Tibial artery (tissue), 4 donors: ENCODE measurements at regions of chr13 and their contacts with region 1.

Region 1: GRCh38 chr13:98328911-98329310 is 151.8 kb upstream of the RNF113B start:
- DNase-seq: no peak
- H3K4me3 ChIP-seq: no peak overlapping the region
- H3K27ac ChIP-seq: no peak overlapping the region
- H3K4me1 ChIP-seq: peaks cover 0 to 6% (median 0%) of the 10 kb centered on the region in 4 donors
- H3K27me3 ChIP-seq: no peaks in the 10 kb centered on the region
- CTCF ChIP-seq: no peak

Region 2: DNA sequence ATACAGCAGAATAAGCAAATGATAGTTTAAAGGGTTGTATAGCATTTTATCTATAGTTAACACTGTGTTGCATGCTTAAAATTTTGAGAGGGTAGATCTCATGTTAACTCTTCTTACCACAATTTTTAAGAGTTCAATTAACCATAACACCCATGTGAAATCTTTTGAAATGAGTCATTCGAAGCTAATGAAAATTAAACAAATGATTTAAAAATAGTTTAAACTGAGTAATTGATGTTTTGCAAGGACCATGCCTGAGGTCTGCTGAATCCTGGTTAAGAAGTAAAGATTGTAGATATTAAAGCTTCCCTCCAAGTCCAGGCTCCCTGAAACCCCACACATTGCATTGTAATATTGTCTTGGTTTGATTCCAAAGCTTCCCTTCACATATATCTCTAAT is 24.8 kb after region 1 on chr13:
- intact Hi-C with region 1: loop called (anchors 1 kb)
- DNase-seq: no peak
- H3K4me3 ChIP-seq: no peak overlapping the region
- H3K27ac ChIP-seq: no peak overlapping the region
- H3K4me1 ChIP-seq: peaks cover 0 to 6% (median 0%) of the 10 kb centered on the region in 4 donors
- H3K27me3 ChIP-seq: no peaks in the 10 kb centered on the region
- CTCF ChIP-seq: no peak

Region 3: GRCh38 chr13:98384739-98385138 is 55.8 kb after region 1 on chr13:
- intact Hi-C with region 1: no loop called
- DNase-seq: no peak
- H3K4me3 ChIP-seq: no peak overlapping the region
- H3K27ac ChIP-seq: no peak overlapping the region
- H3K4me1 ChIP-seq: peaks cover 0 to 4% (median 0%) of the 10 kb centered on the region in 4 donors
- H3K27me3 ChIP-seq: no peaks in the 10 kb centered on the region
- CTCF ChIP-seq: no peak

Region 4: GRCh38 chr13:98419848-98420553 is 91.1 kb after region 1 on chr13:
- intact Hi-C with region 1: no loop called
- DNase-seq: no peak
- H3K4me3 ChIP-seq: no peak overlapping the region
- H3K27ac ChIP-seq: no peak overlapping the region
- H3K4me1 ChIP-seq: no peaks in the 10 kb centered on the region
- H3K27me3 ChIP-seq: no peaks in the 10 kb centered on the region
- CTCF ChIP-seq: no peak

Region 5: GRCh38 chr13:98454389-98454881 is 125.5 kb after region 1 on chr13:
- intact Hi-C with region 1: no loop called
- DNase-seq: peak in 1 of 2 donors; percentile 84
- H3K4me3 ChIP-seq: no peak overlapping the region
- H3K27ac ChIP-seq: peak overlapping the region; percentile 77 to 80
- H3K4me1 ChIP-seq: peaks cover 0 to 80% (median 36%) of the 10 kb centered on the region in 4 donors
- H3K27me3 ChIP-seq: no peaks in the 10 kb centered on the region
- CTCF ChIP-seq: no peak